ENCODE measurements at regions of chr3 and their contacts with region 1.

Region 1: GRCh38 chr3:14124615-14125190 is at the starts of genes CHCHD4 and TMEM43:
- DNase-seq: peak; percentile 99
- ATAC-seq: peak; percentile 93
- H3K4me3 Mint-ChIP-seq: peak within 1 kb of the TSS; percentile 95
- H3K27ac Mint-ChIP-seq: peak within 1 kb of the TSS; percentile 93
- H3K4me1 Mint-ChIP-seq: peaks cover 51% of the 10 kb centered on the region
- H3K27me3 Mint-ChIP-seq: no peaks in the 10 kb centered on the region
- CTCF ChIP-seq: no peak
- total RNA-seq, gene CHCHD4: 27.6 to 30.2 TPM
- total RNA-seq, gene TMEM43: 19.7 to 20.2 TPM

Region 2: GRCh38 chr3:13727890-13728289 is 396.8 kb before region 1 on chr3:
- CTCF ChIA-PET with region 1: no interaction called
- POLR2A ChIA-PET with region 1: no interaction called
- intact Hi-C with region 1: no loop called
- DNase-seq: no peak
- ATAC-seq: no peak
- H3K4me3 Mint-ChIP-seq: no peak overlapping the region
- H3K27ac Mint-ChIP-seq: no peak overlapping the region
- H3K4me1 Mint-ChIP-seq: no peaks in the 10 kb centered on the region
- H3K27me3 Mint-ChIP-seq: peaks cover 22% of the 10 kb centered on the region
- CTCF ChIP-seq: no peak

Region 3: GRCh38 chr3:13895155-13896105 is 229.3 kb before region 1 on chr3:
- CTCF ChIA-PET with region 1: interaction called, 33 read pairs
- POLR2A ChIA-PET with region 1: interaction called, 21 read pairs
- intact Hi-C with region 1: loop called (anchors 5 kb)
- DNase-seq: peak; percentile 98
- ATAC-seq: peak; percentile 99
- H3K4me3 Mint-ChIP-seq: peak overlapping the region; percentile 83
- H3K27ac Mint-ChIP-seq: peak overlapping the region; percentile 76
- H3K4me1 Mint-ChIP-seq: peaks cover 22% of the 10 kb centered on the region
- H3K27me3 Mint-ChIP-seq: no peaks in the 10 kb centered on the region
- CTCF ChIP-seq: no peak

Region 4: DNA sequence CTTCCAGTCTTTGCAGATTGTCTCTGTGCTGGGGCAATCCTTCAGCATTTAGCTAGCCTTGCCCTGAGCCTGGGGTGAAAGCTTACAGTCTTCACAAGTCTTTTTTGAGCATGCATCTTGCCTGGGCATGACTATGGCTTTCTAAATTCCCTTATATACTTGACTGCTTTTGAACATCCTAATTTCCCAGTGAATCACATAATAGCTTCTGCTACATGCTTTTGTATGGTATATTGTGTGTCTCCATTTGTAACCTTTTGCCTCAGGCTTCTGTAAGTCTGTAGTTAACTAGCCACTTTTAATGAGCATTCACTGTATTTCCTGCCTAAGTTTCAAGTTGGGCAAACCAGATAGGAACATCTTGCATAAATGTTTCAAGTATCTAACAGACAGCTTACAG is 76.9 kb before region 1 on chr3:
- CTCF ChIA-PET with region 1: no interaction called
- POLR2A ChIA-PET with region 1: no interaction called
- intact Hi-C with region 1: no loop called
- DNase-seq: no peak
- ATAC-seq: no peak
- H3K4me3 Mint-ChIP-seq: no peak overlapping the region
- H3K27ac Mint-ChIP-seq: no peak overlapping the region
- H3K4me1 Mint-ChIP-seq: no peaks in the 10 kb centered on the region
- H3K27me3 Mint-ChIP-seq: peaks cover 22% of the 10 kb centered on the region
- CTCF ChIP-seq: no peak

Region 5: GRCh38 chr3:14178247-14179113 is 53.8 kb after region 1 on chr3 and contains the starts of genes LSM3 and XPC:
- CTCF ChIA-PET with region 1: interaction called, 7 read pairs
- POLR2A ChIA-PET with region 1: interaction called, 39 read pairs
- intact Hi-C with region 1: loop called (anchors 2 kb)
- DNase-seq: peak; percentile 97
- ATAC-seq: peak; percentile 98
- H3K4me3 Mint-ChIP-seq: peak within 1 kb of the TSS; percentile 87
- H3K27ac Mint-ChIP-seq: peak within 1 kb of the TSS; percentile 96
- H3K4me1 Mint-ChIP-seq: peaks cover 57% of the 10 kb centered on the region
- H3K27me3 Mint-ChIP-seq: no peaks in the 10 kb centered on the region
- CTCF ChIP-seq: no peak
- total RNA-seq, gene LSM3: 20.0 to 20.5 TPM
- total RNA-seq, gene XPC: 23.5 to 24.8 TPM

Measured in activated CD8-positive, alpha-beta T cell treated with anti-CD3 and anti-CD28 coated beads for 36 hours (primary cell).